ENCODE measurements at regions of chr11 and their contacts with region 1.

Region 1: DNA sequence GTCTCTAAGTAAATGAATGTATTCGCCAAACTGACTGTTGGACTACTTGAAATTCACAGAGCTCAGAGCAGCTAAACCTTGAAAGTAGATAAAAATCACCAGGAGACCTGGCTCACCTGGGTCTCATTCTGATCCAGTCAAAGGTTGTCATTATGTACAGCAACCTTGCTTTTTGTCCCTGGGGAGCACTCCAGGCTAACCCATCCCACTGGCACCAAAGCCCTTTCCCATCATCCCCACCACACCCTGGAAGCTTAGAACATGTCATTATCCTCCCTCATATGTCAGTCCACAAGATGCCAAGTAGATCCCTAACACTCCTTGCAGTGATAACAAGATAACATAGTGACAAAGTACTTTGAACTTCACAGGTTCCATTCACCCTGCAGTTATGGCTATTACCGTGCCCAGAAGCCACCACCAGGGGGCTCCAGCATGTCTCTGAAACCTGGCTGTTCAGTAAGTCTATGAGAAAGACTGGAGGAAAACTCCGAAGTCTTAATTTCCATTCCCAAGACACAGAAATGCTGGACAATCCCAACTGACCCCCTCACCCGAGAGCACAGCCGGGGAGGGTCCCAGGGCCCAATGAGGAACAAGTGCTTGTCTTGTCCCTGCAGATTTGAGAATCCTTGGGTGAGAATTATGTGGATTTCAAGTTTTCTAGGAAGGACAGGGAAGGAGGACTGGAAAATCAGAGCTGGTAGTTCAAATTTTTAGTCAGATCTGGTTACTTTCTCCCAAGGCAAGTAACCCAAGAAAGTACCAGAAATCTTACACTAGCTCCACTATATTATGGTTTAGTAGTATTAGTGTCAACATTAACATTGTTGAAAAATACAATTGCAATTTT is 43.0 kb upstream of the USP47 start:
- DNase-seq: peak; percentile 60 to 87 (median 82)
- ATAC-seq: peak; percentile 96 to 100 (median 98)
- H3K4me3 ChIP-seq: no peak overlapping the region
- H3K27ac ChIP-seq: no peak overlapping the region
- H3K4me1 ChIP-seq: peaks cover 0 to 5% (median 0%) of the 10 kb centered on the region in 4 donors
- H3K27me3 ChIP-seq: no peaks in the 10 kb centered on the region
- CTCF ChIP-seq: peak; percentile 74 to 97 (median 91)
- POLR2A ChIP-seq: no peak

Region 2: GRCh38 chr11:11608783-11609232 is 190.0 kb before region 1 on chr11:
- intact Hi-C with region 1: no loop called
- DNase-seq: no peak
- ATAC-seq: no peak
- H3K4me3 ChIP-seq: no peak overlapping the region
- H3K27ac ChIP-seq: no peak overlapping the region
- H3K4me1 ChIP-seq: no peaks in the 10 kb centered on the region
- H3K27me3 ChIP-seq: no peaks in the 10 kb centered on the region
- CTCF ChIP-seq: no peak
- POLR2A ChIP-seq: no peak

Region 3: GRCh38 chr11:11672789-11673188 is 126.0 kb before region 1 on chr11:
- intact Hi-C with region 1: no loop called
- DNase-seq: no peak
- ATAC-seq: no peak
- H3K4me3 ChIP-seq: no peak overlapping the region
- H3K27ac ChIP-seq: no peak overlapping the region
- H3K4me1 ChIP-seq: no peaks in the 10 kb centered on the region
- H3K27me3 ChIP-seq: no peaks in the 10 kb centered on the region
- CTCF ChIP-seq: no peak
- POLR2A ChIP-seq: no peak

Region 4: DNA sequence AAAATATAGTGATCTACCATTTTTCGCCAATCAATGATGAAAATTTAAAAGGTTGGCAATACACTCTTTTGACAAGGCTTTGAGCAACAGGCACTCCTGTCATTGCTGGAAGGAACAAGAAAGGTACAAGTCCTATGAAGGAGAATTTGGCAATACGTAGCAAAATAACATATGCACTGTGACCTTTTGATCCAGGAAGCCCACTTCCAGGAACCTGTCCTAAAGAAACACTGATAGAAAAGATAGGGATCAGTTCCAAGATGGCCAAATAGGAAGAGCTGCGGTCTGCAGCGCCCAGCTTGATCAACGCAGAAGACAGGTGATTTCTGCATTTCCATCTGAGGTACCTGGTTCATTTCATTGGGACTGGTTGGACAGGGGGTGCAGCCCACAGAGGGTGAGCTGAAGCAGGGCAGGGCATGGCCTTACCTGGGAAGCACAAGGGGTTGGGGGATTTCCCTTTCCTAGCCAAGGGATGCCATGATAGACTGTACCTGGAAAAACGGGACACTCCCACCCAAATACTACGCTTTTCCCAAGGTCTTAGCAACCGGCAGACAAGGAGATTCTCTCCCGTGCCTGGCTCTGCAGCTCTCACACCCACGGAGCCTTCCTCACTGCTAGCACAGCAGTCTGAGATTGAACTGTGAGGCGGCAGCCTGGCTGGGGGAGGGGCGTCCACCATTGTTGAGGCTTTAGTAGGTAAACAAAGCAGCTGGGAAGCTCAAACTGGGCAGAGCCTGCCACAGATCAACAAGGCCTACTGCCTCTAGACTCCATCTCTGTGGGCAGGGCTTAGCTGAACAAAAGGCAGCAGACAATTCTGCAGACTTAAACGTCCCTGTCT is 107.3 kb before region 1 on chr11:
- intact Hi-C with region 1: no loop called
- DNase-seq: no peak
- ATAC-seq: no peak
- H3K4me3 ChIP-seq: no peak overlapping the region
- H3K27ac ChIP-seq: no peak overlapping the region
- H3K4me1 ChIP-seq: no peaks in the 10 kb centered on the region
- H3K27me3 ChIP-seq: no peaks in the 10 kb centered on the region
- CTCF ChIP-seq: no peak
- POLR2A ChIP-seq: no peak

Region 5: GRCh38 chr11:11848891-11849746 is 50.3 kb after region 1 on chr11:
- intact Hi-C with region 1: loop called in 1 of 2 experiments (anchors 5 kb)
- DNase-seq: peak in 2 of 3 donors; percentile 40 to 74
- ATAC-seq: peak; percentile 94 to 97 (median 96)
- H3K4me3 ChIP-seq: no peak overlapping the region
- H3K27ac ChIP-seq: no peak overlapping the region
- H3K4me1 ChIP-seq: peaks cover 0 to 47% (median 21%) of the 10 kb centered on the region in 4 donors
- H3K27me3 ChIP-seq: no peaks in the 10 kb centered on the region
- CTCF ChIP-seq: peak; percentile 59 to 71 (median 70)
- POLR2A ChIP-seq: no peak

Region 6: GRCh38 chr11:12137938-12138731 is 339.3 kb after region 1 on chr11:
- intact Hi-C with region 1: no loop called
- DNase-seq: no peak
- ATAC-seq: peak in 2 of 4 donors; percentile 19 to 27
- H3K4me3 ChIP-seq: no peak overlapping the region
- H3K27ac ChIP-seq: no peak overlapping the region
- H3K4me1 ChIP-seq: peaks cover 0 to 3% (median 0%) of the 10 kb centered on the region in 4 donors
- H3K27me3 ChIP-seq: no peaks in the 10 kb centered on the region
- CTCF ChIP-seq: no peak
- POLR2A ChIP-seq: no peak